Naive thymus-derived CD8-positive, alpha-beta T cell (primary cell): ENCODE measurements at regions of chr16 and their contacts with region 1.

Region 1: DNA sequence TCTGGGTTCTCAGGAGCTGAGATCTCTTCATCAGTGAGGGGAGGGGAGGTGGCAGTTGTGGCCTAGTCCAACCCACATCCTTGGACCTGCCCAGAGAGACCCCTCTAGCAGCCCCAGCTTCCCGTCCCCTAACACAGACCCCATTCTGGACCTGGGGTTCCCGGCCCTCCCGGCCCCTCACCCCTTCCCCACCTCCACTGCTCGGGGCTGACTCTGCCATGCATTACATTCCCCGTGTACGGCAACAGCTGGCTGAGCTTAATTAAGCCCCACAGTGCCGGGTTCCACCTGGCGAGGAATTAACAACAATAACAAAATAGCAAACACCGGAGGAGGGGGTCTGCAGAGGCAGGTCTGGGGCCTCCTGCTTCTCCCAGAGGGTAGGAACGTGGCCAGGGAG is 46.6 kb upstream of the CBFA2T3 start:
- DNase-seq: peak in 1 of 10 donors; percentile 51
- ATAC-seq: no peak
- H3K4me3 Mint-ChIP-seq: no peak overlapping the region
- H3K27ac Mint-ChIP-seq: no peak overlapping the region
- H3K4me1 Mint-ChIP-seq: peaks cover 0 to 13% (median 4%) of the 10 kb centered on the region in 4 donors
- H3K27me3 Mint-ChIP-seq: peaks cover 0 to 6% (median 3%) of the 10 kb centered on the region in 5 donors

Region 2: DNA sequence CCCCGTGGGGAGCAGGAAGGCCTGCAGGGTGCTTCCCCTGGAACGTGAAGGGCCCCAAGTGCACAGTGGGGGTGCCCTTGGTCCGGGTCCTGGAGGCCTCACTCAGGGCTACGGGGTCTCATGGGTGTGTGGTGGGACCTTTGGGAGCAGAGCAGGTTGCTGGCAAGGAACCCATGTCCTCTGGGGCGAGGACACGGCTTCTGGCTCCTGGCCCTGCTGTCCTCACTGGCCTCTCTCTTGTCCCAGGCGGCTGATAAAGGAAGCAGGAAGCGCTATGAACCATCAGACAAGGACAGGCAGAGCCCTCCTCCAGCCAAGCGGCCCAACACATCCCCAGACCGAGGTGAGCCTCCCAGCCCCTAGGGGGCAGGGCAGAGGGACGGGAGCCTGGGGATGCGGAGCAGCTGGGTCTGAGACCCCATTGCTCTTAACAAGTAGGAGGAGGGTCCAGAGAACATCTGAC is 395.1 kb before region 1 on chr16:
- POLR2A ChIA-PET with region 1: interaction called, 11 read pairs
- DNase-seq: no peak
- ATAC-seq: peak in 1 of 2 donors; percentile 37
- H3K4me3 Mint-ChIP-seq: no peak overlapping the region
- H3K27ac Mint-ChIP-seq: peak overlapping the region in 3 of 10 donors; percentile 20 to 51 (median 21)
- H3K4me1 Mint-ChIP-seq: peaks cover 0 to 8% (median 3%) of the 10 kb centered on the region in 4 donors
- H3K27me3 Mint-ChIP-seq: no peaks in the 10 kb centered on the region

Region 3: DNA sequence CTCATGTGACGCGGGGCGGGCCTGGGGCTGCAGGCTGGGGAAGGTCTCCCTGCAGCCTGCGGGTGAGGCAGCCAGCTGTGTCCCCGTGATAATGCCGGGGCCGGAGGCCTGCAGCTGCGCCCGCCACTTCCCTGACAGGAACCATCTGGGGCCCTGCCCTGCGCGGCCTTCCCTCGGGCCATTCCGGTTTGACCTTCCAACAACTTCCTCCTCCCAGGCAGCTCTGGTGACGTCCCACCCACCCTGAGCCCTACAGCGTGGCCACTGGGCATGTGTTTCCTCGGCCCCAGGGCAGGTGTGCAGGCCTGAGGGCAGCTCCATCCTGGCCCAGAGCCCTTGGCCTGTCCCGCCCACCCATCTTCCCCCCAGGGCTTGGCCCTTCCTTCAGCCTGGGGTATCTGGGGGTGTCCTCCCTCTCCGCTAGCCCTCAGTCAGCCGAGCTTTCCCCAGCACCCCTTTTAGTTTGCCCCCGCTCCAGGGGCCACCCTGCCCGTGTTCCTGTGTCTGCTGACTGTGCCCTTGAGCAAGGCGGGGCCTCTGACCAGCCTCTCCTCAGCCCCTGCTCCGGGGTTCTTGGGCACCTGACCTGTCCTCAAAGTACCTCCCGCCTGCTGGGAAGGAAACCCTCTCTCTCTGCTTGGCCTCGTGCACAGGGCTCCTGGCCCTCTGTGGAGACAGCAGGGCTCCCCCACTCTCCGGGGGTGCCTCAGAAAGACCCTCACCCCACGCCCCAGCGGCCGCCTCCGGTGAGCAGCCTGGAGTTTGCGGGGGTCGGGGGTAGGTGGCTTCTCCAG is 46.4 kb before region 1 on chr16 and contains the start of gene CBFA2T3:
- POLR2A ChIA-PET with region 1: no interaction called
- DNase-seq: no peak
- ATAC-seq: no peak
- H3K4me3 Mint-ChIP-seq: peak within 1 kb of the TSS in 2 of 10 donors; percentile 23 to 73
- H3K27ac Mint-ChIP-seq: no peak within 1 kb of the TSS
- H3K4me1 Mint-ChIP-seq: peaks cover 0 to 32% (median under 1%) of the 10 kb centered on the region in 4 donors
- H3K27me3 Mint-ChIP-seq: peaks cover 2 to 60% (median 34%) of the 10 kb centered on the region in 5 donors
- polyA plus RNA-seq, gene CBFA2T3: 0.04 TPM in 1 of 3 donors, not detected in the others